Calu3 (cell line): ENCODE measurements at regions of chr21 and their contacts with region 1.

Region 1: GRCh38 chr21:33419538-33420123 is 16.4 kb downstream of the IFNGR2 start:
- DNase-seq: no peak
- H3K4me3 Mint-ChIP-seq: peak overlapping the region; percentile 14
- H3K27ac Mint-ChIP-seq: peak overlapping the region; percentile 81
- H3K4me1 Mint-ChIP-seq: peaks cover 33% of the 10 kb centered on the region
- H3K27me3 Mint-ChIP-seq: no peaks in the 10 kb centered on the region
- CTCF ChIP-seq: no peak

Region 2: GRCh38 chr21:33380483-33380998 is 39.1 kb before region 1 on chr21:
- CTCF ChIA-PET with region 1: no interaction called
- intact Hi-C with region 1: loop called (anchors 5 kb)
- DNase-seq: peak; percentile 93
- H3K4me3 Mint-ChIP-seq: no peak overlapping the region
- H3K27ac Mint-ChIP-seq: peak overlapping the region; percentile 74
- H3K4me1 Mint-ChIP-seq: peaks cover 18% of the 10 kb centered on the region
- H3K27me3 Mint-ChIP-seq: no peaks in the 10 kb centered on the region
- CTCF ChIP-seq: no peak

Region 3: GRCh38 chr21:33458861-33459260 is 39.2 kb after region 1 on chr21:
- CTCF ChIA-PET with region 1: no interaction called
- intact Hi-C with region 1: no loop called
- DNase-seq: no peak
- H3K4me3 Mint-ChIP-seq: no peak overlapping the region
- H3K27ac Mint-ChIP-seq: no peak overlapping the region
- H3K4me1 Mint-ChIP-seq: no peaks in the 10 kb centered on the region
- H3K27me3 Mint-ChIP-seq: no peaks in the 10 kb centered on the region
- CTCF ChIP-seq: no peak

Region 4: DNA sequence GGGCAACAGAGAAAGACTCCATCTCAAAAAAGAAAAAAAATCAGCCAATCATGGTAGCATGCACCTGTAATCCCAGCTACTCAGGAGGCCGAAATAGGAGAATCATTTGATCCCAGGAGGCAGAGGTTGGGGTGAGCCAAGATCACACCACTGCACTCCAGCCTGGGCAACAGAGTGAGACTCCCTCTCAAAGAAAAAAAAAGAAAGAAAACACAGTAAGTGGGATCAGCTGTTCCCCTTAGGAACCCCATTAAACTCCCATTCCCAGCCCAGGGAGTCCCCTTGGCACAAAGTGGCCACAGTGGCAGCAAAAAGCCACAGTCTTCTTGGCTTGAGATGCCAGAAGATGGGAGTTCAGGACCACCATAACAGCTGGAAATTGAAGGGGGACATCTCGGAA is 51.1 kb after region 1 on chr21:
- CTCF ChIA-PET with region 1: no interaction called
- intact Hi-C with region 1: no loop called
- DNase-seq: no peak
- H3K4me3 Mint-ChIP-seq: no peak overlapping the region
- H3K27ac Mint-ChIP-seq: no peak overlapping the region
- H3K4me1 Mint-ChIP-seq: no peaks in the 10 kb centered on the region
- H3K27me3 Mint-ChIP-seq: no peaks in the 10 kb centered on the region
- CTCF ChIP-seq: no peak

Region 5: GRCh38 chr21:33884376-33885171 is 464.9 kb after region 1 on chr21:
- CTCF ChIA-PET with region 1: no interaction called
- intact Hi-C with region 1: no loop called
- DNase-seq: no peak
- H3K4me3 Mint-ChIP-seq: no peak overlapping the region
- H3K27ac Mint-ChIP-seq: no peak overlapping the region
- H3K4me1 Mint-ChIP-seq: no peaks in the 10 kb centered on the region
- H3K27me3 Mint-ChIP-seq: peaks cover 14% of the 10 kb centered on the region
- CTCF ChIP-seq: no peak